Right ventricle myocardium inferior (tissue), 1 donor: ENCODE measurements at regions of chr11 and their contacts with region 1.

Region 1: GRCh38 chr11:113896156-113896879 is 8.3 kb upstream of the HTR3B start:
- DNase-seq: no peak
- ATAC-seq: peak; percentile 62

Region 2: GRCh38 chr11:113974741-113975470 is 78.6 kb after region 1 on chr11 and contains the start of gene HTR3A:
- intact Hi-C with region 1: loop called (anchors 5 kb)
- DNase-seq: peak; percentile 78
- ATAC-seq: peak; percentile 95
- total RNA-seq, gene HTR3A: not detected

Region 3: GRCh38 chr11:114036156-114036811 is 140.0 kb after region 1 on chr11:
- intact Hi-C with region 1: loop called (anchors 10 kb)
- DNase-seq: peak; percentile 94
- ATAC-seq: peak; percentile 96